Activated CD8-positive, alpha-beta T cell treated with anti-CD3 and anti-CD28 coated beads, Interleukin-2, amount 10 ng/mL, durations not matched to agents 7 days and 5 days (primary cell): ENCODE measurements at regions of chr3 and their contacts with region 1.

Region 1: DNA sequence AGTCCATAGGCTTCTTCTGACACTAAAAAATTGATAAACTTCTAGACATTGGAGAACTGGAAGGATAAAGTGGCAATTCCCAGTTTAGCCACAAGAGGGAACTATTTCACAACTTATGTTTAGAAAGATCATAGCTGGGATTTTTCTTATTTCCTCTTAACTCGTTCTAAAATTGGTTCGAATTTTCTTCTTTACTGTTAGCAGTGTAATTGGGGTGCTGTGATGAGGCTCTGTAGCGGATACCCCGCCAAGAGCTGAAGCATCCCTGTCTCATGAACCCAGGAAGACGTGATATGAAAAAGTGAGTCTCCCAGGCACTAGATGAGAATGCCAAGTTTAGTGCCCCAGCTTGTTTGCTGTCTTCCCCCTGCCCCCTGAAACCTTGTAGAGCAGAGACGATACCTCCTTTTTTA is 85.1 kb downstream of the PDCD6IP start:
- DNase-seq: peak; percentile 46
- ATAC-seq: no peak
- H3K4me3 Mint-ChIP-seq: no peak overlapping the region
- H3K27ac Mint-ChIP-seq: no peak overlapping the region
- H3K4me1 Mint-ChIP-seq: peaks cover 2% of the 10 kb centered on the region
- H3K27me3 Mint-ChIP-seq: no peaks in the 10 kb centered on the region

Region 2: DNA sequence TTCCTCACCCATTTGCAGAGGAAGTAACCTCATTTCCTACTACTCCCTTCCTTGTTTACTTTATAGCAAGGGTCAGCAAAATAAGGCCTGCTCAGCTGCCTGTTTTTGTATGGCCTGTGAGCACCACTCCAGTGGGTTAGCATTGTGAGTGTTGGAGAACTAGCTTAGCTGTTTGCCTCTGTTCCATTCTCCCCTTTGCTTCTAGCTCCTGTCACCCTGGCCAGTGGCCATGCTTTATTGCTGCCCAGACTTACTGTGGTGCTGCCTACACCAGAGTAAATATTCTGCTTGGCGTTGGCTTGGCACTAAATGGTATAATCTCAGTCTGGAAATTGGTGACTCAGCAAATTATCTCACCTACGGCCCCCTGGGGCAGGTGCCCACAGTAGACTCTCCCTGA is 76.4 kb before region 1 on chr3:
- CTCF ChIA-PET with region 1: no interaction called
- POLR2A ChIA-PET with region 1: no interaction called
- DNase-seq: no peak
- ATAC-seq: no peak
- H3K4me3 Mint-ChIP-seq: no peak overlapping the region
- H3K27ac Mint-ChIP-seq: no peak overlapping the region
- H3K4me1 Mint-ChIP-seq: peaks cover 51% of the 10 kb centered on the region
- H3K27me3 Mint-ChIP-seq: no peaks in the 10 kb centered on the region

Region 3: GRCh38 chr3:34015204-34016142 is 131.9 kb after region 1 on chr3:
- CTCF ChIA-PET with region 1: interaction called, 27 read pairs
- POLR2A ChIA-PET with region 1: no interaction called
- DNase-seq: peak; percentile 23
- ATAC-seq: no peak
- H3K4me3 Mint-ChIP-seq: no peak overlapping the region
- H3K27ac Mint-ChIP-seq: peak overlapping the region; percentile 37
- H3K4me1 Mint-ChIP-seq: peaks cover 32% of the 10 kb centered on the region
- H3K27me3 Mint-ChIP-seq: peaks cover 4% of the 10 kb centered on the region

Region 4: DNA sequence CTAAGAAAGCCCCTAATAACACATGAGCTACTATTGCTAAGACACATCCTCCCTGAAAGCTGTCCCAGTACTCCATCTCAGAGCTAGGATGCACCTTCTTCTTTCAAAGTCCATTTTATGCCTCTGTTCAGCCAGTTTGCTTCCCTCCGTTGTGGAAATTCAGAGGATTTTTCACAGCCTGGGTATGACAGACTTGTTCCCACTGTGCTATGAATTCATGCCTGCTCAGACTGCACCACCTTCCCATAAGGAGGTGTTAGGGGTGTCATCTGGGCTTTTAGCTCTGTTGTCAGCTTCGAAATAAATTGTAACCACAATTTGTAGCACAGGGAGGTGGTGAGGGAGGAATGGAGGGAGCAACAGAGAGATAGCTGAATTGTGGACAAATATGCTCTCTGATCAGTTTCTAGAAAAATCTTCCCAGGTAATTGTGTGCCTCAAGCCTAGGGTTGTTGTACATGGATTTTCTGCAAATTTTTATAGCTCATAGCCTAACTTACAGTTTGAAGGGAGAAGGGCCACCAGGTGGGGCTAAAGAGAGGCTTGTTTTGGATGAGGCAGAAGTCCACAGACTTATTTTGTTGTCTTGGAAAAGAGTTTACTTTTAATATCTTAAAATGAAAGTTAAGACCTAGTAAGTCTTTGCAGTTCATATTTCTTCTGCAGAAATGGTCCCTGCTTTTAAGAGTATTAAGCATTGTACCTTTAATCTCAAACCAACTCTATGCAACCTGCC is 376.9 kb after region 1 on chr3:
- CTCF ChIA-PET with region 1: interaction called, 12 read pairs
- POLR2A ChIA-PET with region 1: no interaction called
- DNase-seq: peak; percentile 49
- ATAC-seq: no peak
- H3K4me3 Mint-ChIP-seq: no peak overlapping the region
- H3K27ac Mint-ChIP-seq: no peak overlapping the region
- H3K4me1 Mint-ChIP-seq: no peaks in the 10 kb centered on the region
- H3K27me3 Mint-ChIP-seq: peaks cover 5% of the 10 kb centered on the region

Region 5: GRCh38 chr3:34683851-34684250 is 800.3 kb after region 1 on chr3:
- CTCF ChIA-PET with region 1: interaction called, 34 read pairs
- POLR2A ChIA-PET with region 1: no interaction called
- DNase-seq: peak; percentile 48
- ATAC-seq: no peak
- H3K4me3 Mint-ChIP-seq: no peak overlapping the region
- H3K27ac Mint-ChIP-seq: no peak overlapping the region
- H3K4me1 Mint-ChIP-seq: no peaks in the 10 kb centered on the region
- H3K27me3 Mint-ChIP-seq: no peaks in the 10 kb centered on the region